ENCODE measurements at regions of chr22 and their contacts with region 1.

Region 1: GRCh38 chr22:19398206-19398605 is 33.3 kb downstream of the HIRA start:
- DNase-seq: no peak
- ATAC-seq: no peak
- H3K4me3 ChIP-seq: no peak overlapping the region
- H3K27ac ChIP-seq: no peak overlapping the region
- H3K4me1 ChIP-seq: no peaks in the 10 kb centered on the region
- H3K27me3 ChIP-seq: no peaks in the 10 kb centered on the region
- CTCF ChIP-seq: no peak
- POLR2A ChIP-seq: no peak

Region 2: GRCh38 chr22:19214078-19214473 is 184.1 kb before region 1 on chr22:
- in situ Hi-C with region 1: loop called in 1 of 4 experiments (anchors 25 kb)
- intact Hi-C with region 1: no loop called
- DNase-seq: no peak
- ATAC-seq: no peak
- H3K4me3 ChIP-seq: no peak overlapping the region
- H3K27ac ChIP-seq: peak overlapping the region in 3 of 4 donors; percentile 83 to 90 (median 90)
- H3K4me1 ChIP-seq: peaks cover 26 to 43% of the 10 kb centered on the region in 2 donors
- H3K27me3 ChIP-seq: no peaks in the 10 kb centered on the region
- CTCF ChIP-seq: no peak
- POLR2A ChIP-seq: no peak

Measured in gastrocnemius medialis (tissue), 4 donors.